ENCODE measurements at regions of chr10 and their contacts with region 1.

Region 1: GRCh38 chr10:88735661-88736060 is 24.2 kb upstream of the LIPN start:
- DNase-seq: no peak
- ATAC-seq: no peak
- H3K4me3 ChIP-seq: no peak overlapping the region
- H3K4me3 Mint-ChIP-seq: no peak overlapping the region
- H3K27ac ChIP-seq: no peak overlapping the region
- H3K27ac Mint-ChIP-seq: no peak overlapping the region
- H3K4me1 ChIP-seq: no peaks in the 10 kb centered on the region
- H3K4me1 Mint-ChIP-seq: no peaks in the 10 kb centered on the region
- H3K27me3 ChIP-seq: no peaks in the 10 kb centered on the region
- H3K27me3 Mint-ChIP-seq: peaks cover 8% of the 10 kb centered on the region
- CTCF ChIP-seq: no peak

Region 2: GRCh38 chr10:88783724-88784123 is 48.1 kb after region 1 on chr10:
- CTCF ChIA-PET with region 1: no interaction called
- POLR2A ChIA-PET with region 1: no interaction called
- intact Hi-C with region 1: loop called in 1 of 2 experiments (anchors 5 kb)
- DNase-seq: no peak
- ATAC-seq: no peak
- H3K4me3 ChIP-seq: no peak overlapping the region
- H3K4me3 Mint-ChIP-seq: no peak overlapping the region
- H3K27ac ChIP-seq: no peak overlapping the region
- H3K27ac Mint-ChIP-seq: no peak overlapping the region
- H3K4me1 ChIP-seq: no peaks in the 10 kb centered on the region
- H3K4me1 Mint-ChIP-seq: peaks cover 2% of the 10 kb centered on the region
- H3K27me3 ChIP-seq: no peaks in the 10 kb centered on the region
- H3K27me3 Mint-ChIP-seq: peaks cover 4% of the 10 kb centered on the region
- CTCF ChIP-seq: no peak

Measured in CD8-positive, alpha-beta T cell (primary cell).